CD4-positive, alpha-beta T cell (primary cell): ENCODE measurements at regions of chr3 and their contacts with region 1.

Region 1: DNA sequence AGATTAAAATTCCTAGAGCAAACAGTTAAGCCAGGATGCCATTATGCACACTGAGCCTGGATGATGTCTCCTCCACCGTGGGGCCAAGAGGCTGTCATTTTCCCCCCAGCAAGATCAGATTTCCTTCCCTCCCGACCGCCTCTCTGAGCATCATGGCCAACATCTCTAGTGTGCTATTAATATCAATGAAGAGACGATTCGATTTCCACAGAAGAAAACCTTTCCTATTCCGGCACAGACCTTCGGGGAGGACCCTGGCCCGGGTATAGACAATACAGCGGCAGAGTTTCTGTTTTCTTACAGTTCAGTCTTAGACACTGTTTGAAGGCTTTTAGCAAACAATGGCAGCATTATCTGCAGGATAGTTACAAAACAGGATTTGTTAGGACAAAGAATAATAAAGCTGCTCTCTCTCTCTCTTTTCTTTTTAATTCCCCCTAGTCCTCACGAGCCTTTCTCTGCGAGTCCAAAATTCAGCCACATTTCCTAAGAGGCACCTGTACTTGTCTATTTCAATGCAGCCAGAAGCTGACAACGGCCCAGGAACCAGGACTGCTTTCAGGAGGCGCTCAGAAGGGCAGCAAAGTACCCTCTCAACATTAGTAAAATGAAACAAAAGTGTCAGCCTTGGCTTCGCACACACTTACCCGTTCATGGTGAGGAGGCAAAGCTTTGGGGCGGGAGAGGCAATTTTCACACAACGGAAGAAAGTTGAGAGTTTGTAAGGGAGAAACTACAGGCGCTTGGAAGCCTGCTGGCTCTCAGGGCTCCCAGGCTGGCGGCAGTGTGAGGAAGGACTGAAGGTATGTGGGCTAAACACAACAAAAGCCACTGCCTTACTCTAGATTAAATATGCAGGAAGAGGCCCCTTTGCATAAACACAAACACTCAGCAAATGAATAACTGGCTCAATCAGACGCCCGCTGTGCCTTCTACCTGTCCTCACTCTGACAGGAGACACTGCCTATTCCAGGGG is 278.0 kb downstream of the FOXP1 start:
- DNase-seq: peak in 9 of 14 experiments; percentile 12 to 50 (median 19)
- ATAC-seq: peak; percentile 44
- H3K4me3 ChIP-seq: peak overlapping the region; percentile 60
- H3K4me3 Mint-ChIP-seq: peak overlapping the region; percentile 87
- H3K27ac ChIP-seq: peak overlapping the region; percentile 6 to 69
- H3K27ac Mint-ChIP-seq: peak overlapping the region; percentile 93
- H3K4me1 ChIP-seq: peaks cover 24% of the 10 kb centered on the region
- H3K4me1 Mint-ChIP-seq: peaks cover 96% of the 10 kb centered on the region
- H3K27me3 ChIP-seq: no peaks in the 10 kb centered on the region
- H3K27me3 Mint-ChIP-seq: no peaks in the 10 kb centered on the region
- CTCF ChIP-seq: no peak

Region 2: DNA sequence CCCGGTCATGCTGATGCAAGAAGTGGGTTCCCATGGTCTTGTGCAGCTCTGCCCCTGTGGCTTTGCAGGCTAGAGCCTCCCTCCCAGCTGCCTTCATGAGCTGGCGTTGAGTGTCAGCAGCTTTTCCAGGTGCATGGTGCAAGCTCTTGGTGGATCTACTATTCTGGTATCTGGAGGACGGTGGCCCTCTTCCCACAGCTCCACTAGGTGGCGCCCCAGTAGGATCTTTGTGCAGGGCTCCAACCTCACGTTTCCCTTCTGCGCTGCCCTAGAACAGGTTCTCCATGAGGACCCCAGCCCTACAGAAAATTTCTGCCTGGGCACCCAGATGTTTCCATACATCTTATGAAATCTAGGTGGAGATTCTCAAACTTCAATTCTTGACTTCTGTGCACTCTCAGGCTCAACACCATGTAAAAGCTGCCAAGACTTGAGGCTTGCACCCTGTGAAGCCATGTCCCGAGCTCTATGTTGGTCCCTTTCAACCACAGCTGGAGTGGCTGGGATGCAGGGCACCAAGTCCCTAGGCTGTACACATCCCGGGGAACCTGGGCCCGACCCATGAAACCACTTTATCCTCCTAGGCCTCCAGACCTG is 754.7 kb before region 1 on chr3:
- CTCF ChIA-PET with region 1: no interaction called
- POLR2A ChIA-PET with region 1: no interaction called
- intact Hi-C with region 1: loop called (anchors 2 kb)
- DNase-seq: peak; percentile 59 to 83 (median 65)
- ATAC-seq: peak; percentile 84
- H3K4me3 ChIP-seq: no peak overlapping the region
- H3K4me3 Mint-ChIP-seq: no peak overlapping the region
- H3K27ac ChIP-seq: no peak overlapping the region
- H3K27ac Mint-ChIP-seq: no peak overlapping the region
- H3K4me1 ChIP-seq: no peaks in the 10 kb centered on the region
- H3K4me1 Mint-ChIP-seq: no peaks in the 10 kb centered on the region
- H3K27me3 ChIP-seq: no peaks in the 10 kb centered on the region
- H3K27me3 Mint-ChIP-seq: peaks cover 12% of the 10 kb centered on the region
- CTCF ChIP-seq: peak; percentile 75

Region 3: DNA sequence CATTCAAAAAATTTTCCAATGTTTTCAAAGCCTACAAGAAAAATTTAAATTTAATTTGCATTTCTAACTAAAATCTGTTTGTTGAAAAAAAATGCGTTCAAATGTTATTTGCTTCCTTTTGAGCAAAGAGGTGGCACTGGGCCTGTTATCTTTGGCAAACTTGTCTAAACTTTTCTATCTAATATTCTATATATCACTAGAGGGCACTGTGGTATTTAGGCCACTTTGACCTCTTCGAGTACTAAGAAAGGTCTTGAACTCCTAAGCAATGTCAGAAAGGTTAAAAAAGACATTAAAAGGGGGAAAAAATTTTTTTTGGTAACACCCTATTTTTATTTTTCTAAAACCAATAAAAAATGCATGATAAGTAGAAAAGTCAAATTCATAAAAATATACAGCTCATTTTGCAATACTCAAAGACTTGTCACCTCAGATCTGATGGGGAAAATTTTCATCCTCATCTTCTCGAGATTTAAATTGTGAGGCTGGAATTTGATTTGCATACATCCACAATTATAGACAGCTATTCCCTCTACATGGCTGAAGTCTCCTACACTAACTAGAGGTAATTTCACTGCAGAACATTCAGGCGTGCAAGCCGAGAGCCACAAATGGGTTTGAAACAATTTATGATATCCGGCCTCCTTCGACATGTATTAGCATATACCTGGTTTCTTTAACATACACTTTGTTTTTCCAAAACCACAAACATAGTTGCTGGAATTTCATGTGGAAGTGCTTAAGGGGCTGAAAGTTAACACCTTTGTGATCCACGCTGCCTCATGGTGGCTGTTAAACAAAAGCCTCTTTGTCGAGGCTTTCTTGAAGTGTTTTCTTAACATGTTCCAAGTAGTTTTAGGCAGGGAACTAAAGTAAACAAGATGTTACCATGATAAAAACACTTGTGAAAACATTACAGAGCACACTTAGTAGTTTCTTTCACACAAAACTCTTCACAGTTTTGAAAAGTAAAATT is 298.4 kb before region 1 on chr3:
- CTCF ChIA-PET with region 1: no interaction called
- POLR2A ChIA-PET with region 1: no interaction called
- intact Hi-C with region 1: loop called (anchors 5 kb)
- DNase-seq: peak in 3 of 14 experiments; percentile 61 to 66 (median 63)
- ATAC-seq: no peak
- H3K4me3 ChIP-seq: no peak overlapping the region
- H3K4me3 Mint-ChIP-seq: peak overlapping the region; percentile 22
- H3K27ac ChIP-seq: no peak overlapping the region
- H3K27ac Mint-ChIP-seq: peak overlapping the region; percentile 96
- H3K4me1 ChIP-seq: peaks cover 38% of the 10 kb centered on the region
- H3K4me1 Mint-ChIP-seq: peaks cover 83% of the 10 kb centered on the region
- H3K27me3 ChIP-seq: no peaks in the 10 kb centered on the region
- H3K27me3 Mint-ChIP-seq: no peaks in the 10 kb centered on the region
- CTCF ChIP-seq: peak; percentile 76

Region 4: DNA sequence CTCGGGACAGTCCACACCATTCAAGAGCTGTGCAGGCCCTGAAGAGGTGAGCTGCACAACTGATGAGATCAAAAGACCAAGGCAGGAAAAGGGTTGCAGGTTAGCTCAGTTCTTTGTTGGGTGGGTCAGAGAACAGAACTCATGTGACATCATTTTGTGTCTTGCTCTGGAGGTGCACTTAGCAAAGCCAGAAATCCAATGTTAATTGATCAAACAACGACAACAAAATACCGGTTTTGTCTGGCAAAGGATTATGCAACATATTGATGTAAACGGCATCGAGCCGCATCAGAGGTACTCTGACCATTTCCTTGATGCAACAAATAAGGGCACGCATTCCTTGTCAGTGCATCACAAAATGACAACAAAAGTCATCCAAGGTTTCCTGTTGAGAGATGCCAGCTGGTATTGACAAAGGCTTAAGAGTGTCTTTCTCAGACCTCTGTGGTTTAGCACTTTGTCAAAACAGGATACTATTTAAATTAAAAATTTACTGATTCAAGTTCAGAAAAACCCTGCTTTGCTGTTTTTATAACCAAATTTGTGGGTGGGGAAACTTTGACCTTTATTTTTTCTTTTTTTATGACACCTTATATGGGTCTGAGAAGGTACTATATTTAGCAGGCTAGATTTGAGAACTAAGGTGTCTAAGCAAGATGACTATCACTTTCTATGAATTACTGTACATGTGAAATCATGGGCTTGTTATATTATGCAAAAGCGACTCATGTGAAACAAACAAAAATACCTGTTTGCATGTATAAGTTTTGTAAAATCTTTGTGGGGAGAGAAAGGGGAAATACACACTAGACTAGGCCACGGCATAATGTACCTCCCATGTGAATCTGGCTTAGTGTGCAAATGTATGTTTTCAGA is 218.1 kb before region 1 on chr3:
- CTCF ChIA-PET with region 1: no interaction called
- POLR2A ChIA-PET with region 1: no interaction called
- intact Hi-C with region 1: no loop called
- DNase-seq: peak in 10 of 14 experiments; percentile 14 to 86 (median 47)
- ATAC-seq: peak; percentile 77
- H3K4me3 ChIP-seq: peak overlapping the region; percentile 11
- H3K4me3 Mint-ChIP-seq: peak overlapping the region; percentile 69
- H3K27ac ChIP-seq: peak overlapping the region; percentile 57 to 71
- H3K27ac Mint-ChIP-seq: peak overlapping the region; percentile 86
- H3K4me1 ChIP-seq: peaks cover 81% of the 10 kb centered on the region
- H3K4me1 Mint-ChIP-seq: peaks cover 86% of the 10 kb centered on the region
- H3K27me3 ChIP-seq: no peaks in the 10 kb centered on the region
- H3K27me3 Mint-ChIP-seq: no peaks in the 10 kb centered on the region
- CTCF ChIP-seq: no peak

Region 5: DNA sequence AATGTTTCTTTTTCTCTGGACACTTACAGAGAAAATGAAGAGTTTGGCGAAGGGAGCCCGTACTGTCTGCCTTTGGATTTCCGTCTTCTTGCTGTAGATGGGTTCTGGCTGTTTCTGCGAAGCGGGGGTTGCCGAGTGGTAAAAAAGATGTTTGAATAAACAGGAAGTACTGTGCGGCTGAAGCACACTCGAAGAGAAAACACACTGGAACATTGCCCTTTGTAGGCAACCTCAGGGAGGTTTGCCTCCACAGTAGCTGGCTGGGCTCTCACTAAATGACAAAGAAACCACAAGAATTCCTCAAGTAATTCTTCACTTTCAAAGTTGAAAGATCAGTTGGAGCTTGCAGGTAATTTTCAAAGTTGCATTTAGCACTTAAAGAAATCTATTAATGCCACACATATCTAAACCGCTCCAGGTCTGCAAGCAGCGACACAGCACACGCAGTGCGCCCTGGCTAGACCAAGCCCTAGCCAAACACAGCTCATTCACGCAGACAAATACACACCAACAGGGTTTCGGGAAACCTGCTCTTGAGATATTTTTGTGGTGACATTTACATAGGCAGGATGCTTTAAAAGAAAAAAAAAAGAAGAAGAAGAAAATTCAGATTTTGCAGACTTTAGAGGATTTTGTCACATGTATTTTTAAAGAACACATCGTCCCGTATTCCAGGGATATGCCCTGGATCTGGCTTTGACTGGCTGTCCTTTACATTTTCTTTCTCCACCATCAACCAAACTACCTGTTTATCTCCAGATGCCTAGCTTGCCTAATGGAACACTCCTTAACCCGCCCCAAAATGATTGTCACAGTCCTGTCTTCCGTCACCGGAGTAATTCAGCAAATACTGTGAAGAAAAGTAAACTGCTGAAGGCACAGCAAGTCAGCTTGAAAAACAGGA is 174.8 kb before region 1 on chr3:
- CTCF ChIA-PET with region 1: no interaction called
- POLR2A ChIA-PET with region 1: no interaction called
- intact Hi-C with region 1: loop called (anchors 2 to 5 kb)
- DNase-seq: peak; percentile 56 to 89 (median 73)
- ATAC-seq: peak; percentile 76
- H3K4me3 ChIP-seq: peak overlapping the region; percentile 70
- H3K4me3 Mint-ChIP-seq: peak overlapping the region; percentile 91
- H3K27ac ChIP-seq: peak overlapping the region; percentile 79 to 93
- H3K27ac Mint-ChIP-seq: peak overlapping the region; percentile 98
- H3K4me1 ChIP-seq: peaks cover 53% of the 10 kb centered on the region
- H3K4me1 Mint-ChIP-seq: peaks cover 88% of the 10 kb centered on the region
- H3K27me3 ChIP-seq: no peaks in the 10 kb centered on the region
- H3K27me3 Mint-ChIP-seq: no peaks in the 10 kb centered on the region
- CTCF ChIP-seq: no peak

Region 6: GRCh38 chr3:71226565-71227269 is 78.8 kb before region 1 on chr3:
- CTCF ChIA-PET with region 1: no interaction called
- POLR2A ChIA-PET with region 1: no interaction called
- intact Hi-C with region 1: loop called in 1 of 2 experiments (anchors 2 kb)
- DNase-seq: peak; percentile 52 to 87 (median 72)
- ATAC-seq: peak; percentile 71
- H3K4me3 ChIP-seq: peak overlapping the region; percentile 55
- H3K4me3 Mint-ChIP-seq: peak overlapping the region; percentile 69
- H3K27ac ChIP-seq: peak overlapping the region; percentile 59 to 68
- H3K27ac Mint-ChIP-seq: peak overlapping the region; percentile 87
- H3K4me1 ChIP-seq: peaks cover 24% of the 10 kb centered on the region
- H3K4me1 Mint-ChIP-seq: peaks cover 85% of the 10 kb centered on the region
- H3K27me3 ChIP-seq: no peaks in the 10 kb centered on the region
- H3K27me3 Mint-ChIP-seq: no peaks in the 10 kb centered on the region
- CTCF ChIP-seq: no peak

Region 7: GRCh38 chr3:71360764-71361163 is 55.2 kb after region 1 on chr3:
- CTCF ChIA-PET with region 1: no interaction called
- POLR2A ChIA-PET with region 1: no interaction called
- intact Hi-C with region 1: loop called in 1 of 2 experiments (anchors 10 kb)
- DNase-seq: peak in 2 of 14 experiments; percentile 22 to 36
- ATAC-seq: peak; percentile 55
- H3K4me3 ChIP-seq: peak overlapping the region; percentile 5
- H3K4me3 Mint-ChIP-seq: peak overlapping the region; percentile 72
- H3K27ac ChIP-seq: peak overlapping the region; percentile 10 to 50
- H3K27ac Mint-ChIP-seq: peak overlapping the region; percentile 76
- H3K4me1 ChIP-seq: peaks cover 50% of the 10 kb centered on the region
- H3K4me1 Mint-ChIP-seq: peaks cover 86% of the 10 kb centered on the region
- H3K27me3 ChIP-seq: no peaks in the 10 kb centered on the region
- H3K27me3 Mint-ChIP-seq: no peaks in the 10 kb centered on the region
- CTCF ChIP-seq: no peak

Region 8: DNA sequence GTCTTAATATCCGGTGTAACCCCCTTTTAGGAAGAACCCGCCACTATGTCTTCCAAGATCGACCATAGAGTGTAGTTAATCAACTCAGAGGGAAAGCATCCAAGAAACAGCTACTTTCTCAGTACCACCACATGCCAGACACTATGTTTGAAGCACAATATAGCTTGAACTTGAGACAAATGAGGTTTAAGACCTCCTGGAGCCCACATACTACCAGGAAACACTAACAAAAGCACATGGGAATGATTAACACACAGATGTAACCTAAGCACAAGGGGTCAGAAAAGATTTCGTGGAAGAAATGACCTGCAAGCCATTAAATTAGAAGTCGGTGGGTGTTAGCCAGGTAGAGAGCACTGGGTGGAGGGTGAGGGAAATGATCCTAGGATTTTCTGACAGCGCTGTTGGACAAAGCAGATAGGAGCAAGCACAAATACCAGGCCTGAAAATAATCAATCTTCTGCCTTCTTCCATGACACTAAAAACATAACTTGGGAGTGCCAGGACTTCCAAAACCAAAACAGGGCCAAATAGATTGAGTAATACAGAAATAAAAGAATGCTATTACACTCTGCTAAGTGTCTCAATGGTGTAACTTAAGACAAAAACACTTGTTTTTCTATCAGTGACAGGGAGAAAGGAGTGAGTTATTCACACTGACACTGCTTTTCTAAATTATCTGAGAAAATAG is 64.3 kb after region 1 on chr3:
- CTCF ChIA-PET with region 1: interaction called, 3 read pairs
- POLR2A ChIA-PET with region 1: interaction called, 9 read pairs
- intact Hi-C with region 1: loop called (anchors 2 to 10 kb)
- DNase-seq: no peak
- ATAC-seq: no peak
- H3K4me3 ChIP-seq: no peak overlapping the region
- H3K4me3 Mint-ChIP-seq: no peak overlapping the region
- H3K27ac ChIP-seq: no peak overlapping the region
- H3K27ac Mint-ChIP-seq: peak overlapping the region; percentile 87
- H3K4me1 ChIP-seq: peaks cover 41% of the 10 kb centered on the region
- H3K4me1 Mint-ChIP-seq: peaks cover 82% of the 10 kb centered on the region
- H3K27me3 ChIP-seq: no peaks in the 10 kb centered on the region
- H3K27me3 Mint-ChIP-seq: no peaks in the 10 kb centered on the region
- CTCF ChIP-seq: no peak

Region 9: GRCh38 chr3:71753630-71754483 is 448.3 kb after region 1 on chr3 and contains the start of gene GPR27:
- CTCF ChIA-PET with region 1: no interaction called
- POLR2A ChIA-PET with region 1: no interaction called
- intact Hi-C with region 1: no loop called
- DNase-seq: peak in 4 of 14 experiments; percentile 11 to 48 (median 32)
- ATAC-seq: peak; percentile 58
- H3K4me3 ChIP-seq: no peak within 1 kb of the TSS
- H3K4me3 Mint-ChIP-seq: peak within 1 kb of the TSS; percentile 86
- H3K27ac ChIP-seq: no peak within 1 kb of the TSS
- H3K27ac Mint-ChIP-seq: no peak within 1 kb of the TSS
- H3K4me1 ChIP-seq: peaks cover 10% of the 10 kb centered on the region
- H3K4me1 Mint-ChIP-seq: peaks cover 8% of the 10 kb centered on the region
- H3K27me3 ChIP-seq: peaks cover 24 to 27% of the 10 kb centered on the region in 2 experiments
- H3K27me3 Mint-ChIP-seq: peaks cover 49% of the 10 kb centered on the region
- CTCF ChIP-seq: no peak
- total RNA-seq, gene GPR27: 0.84 to 1.1 TPM